Prostate gland (tissue), 2 donors: ENCODE measurements at regions of chr6 and their contacts with region 1.

Region 1: GRCh38 chr6:130872250-130873095 is 45.3 kb downstream of the SMLR1 start:
- DNase-seq: peak; percentile 39
- H3K4me3 ChIP-seq: no peak overlapping the region
- H3K27ac ChIP-seq: no peak overlapping the region
- H3K4me1 ChIP-seq: no peaks in the 10 kb centered on the region
- H3K27me3 ChIP-seq: no peaks in the 10 kb centered on the region
- CTCF ChIP-seq: peak; percentile 37 to 64 (median 44)
- POLR2A ChIP-seq: no peak

Region 2: GRCh38 chr6:130322673-130323268 is 549.7 kb before region 1 on chr6:
- intact Hi-C with region 1: loop called (anchors 5 kb)
- DNase-seq: peak; percentile 20
- H3K4me3 ChIP-seq: no peak overlapping the region
- H3K27ac ChIP-seq: no peak overlapping the region
- H3K4me1 ChIP-seq: no peaks in the 10 kb centered on the region
- H3K27me3 ChIP-seq: no peaks in the 10 kb centered on the region
- CTCF ChIP-seq: peak; percentile 47 to 74 (median 62)
- POLR2A ChIP-seq: no peak

Region 3: DNA sequence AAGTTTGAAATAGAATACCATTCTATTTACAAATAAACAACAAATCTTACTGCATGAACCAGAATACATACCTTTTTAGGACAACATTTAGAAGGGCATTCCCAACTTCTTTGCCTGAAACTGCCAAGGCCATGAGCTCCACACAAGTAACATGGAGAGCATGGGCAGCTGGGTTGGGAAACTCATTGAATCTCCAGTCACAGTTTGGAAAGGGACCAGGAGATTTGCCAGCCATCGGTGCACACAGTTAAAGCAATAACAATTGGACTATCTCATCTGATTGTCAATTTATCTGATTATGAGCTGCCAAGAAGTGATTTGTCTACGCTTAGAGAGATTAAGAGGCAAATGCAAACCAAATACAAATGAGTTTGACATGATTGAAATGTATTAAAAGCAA is 720.5 kb after region 1 on chr6:
- intact Hi-C with region 1: no loop called
- DNase-seq: no peak
- H3K4me3 ChIP-seq: no peak overlapping the region
- H3K27ac ChIP-seq: no peak overlapping the region
- H3K4me1 ChIP-seq: no peaks in the 10 kb centered on the region
- H3K27me3 ChIP-seq: no peaks in the 10 kb centered on the region
- CTCF ChIP-seq: no peak
- POLR2A ChIP-seq: no peak